ENCODE measurements at regions of chr10 and their contacts with region 1.

Region 1: GRCh38 chr10:21533467-21534279 is at the start of gene MLLT10:
- DNase-seq: peak; percentile 97
- H3K4me3 ChIP-seq: peak within 1 kb of the TSS; percentile 66 to 93 (median 92)
- H3K27ac ChIP-seq: peak within 1 kb of the TSS; percentile 95 to 99 (median 97)
- H3K4me1 ChIP-seq: peaks cover 0 to 56% (median 26%) of the 10 kb centered on the region in 4 donors
- H3K27me3 ChIP-seq: no peaks in the 10 kb centered on the region
- CTCF ChIP-seq: peak in 3 of 4 experiments; percentile 38 to 69 (median 55)
- EP300 ChIP-seq: no peak
- POLR2A ChIP-seq: peak; percentile 59 to 76
- total RNA-seq, gene MLLT10: 36.0 to 53.7 (median 45.1) TPM

Region 2: GRCh38 chr10:21516242-21517131 is 17.2 kb before region 1 on chr10:
- intact Hi-C with region 1: loop called (anchors 1 kb)
- DNase-seq: peak; percentile 83
- H3K4me3 ChIP-seq: peak overlapping the region; percentile 45 to 68 (median 64)
- H3K27ac ChIP-seq: peak overlapping the region; percentile 86 to 99 (median 92)
- H3K4me1 ChIP-seq: peaks cover 0 to 73% (median 35%) of the 10 kb centered on the region in 4 donors
- H3K27me3 ChIP-seq: peaks cover 0 to 6% (median 0%) of the 10 kb centered on the region in 3 donors
- CTCF ChIP-seq: no peak
- EP300 ChIP-seq: no peak
- POLR2A ChIP-seq: no peak

Region 3: GRCh38 chr10:21724695-21725367 is 191.2 kb after region 1 on chr10:
- intact Hi-C with region 1: loop called (anchors 2 kb)
- DNase-seq: peak; percentile 97
- H3K4me3 ChIP-seq: no peak overlapping the region
- H3K27ac ChIP-seq: peak overlapping the region in 3 of 4 donors; percentile 10 to 60 (median 44)
- H3K4me1 ChIP-seq: peaks cover 0 to 28% (median 24%) of the 10 kb centered on the region in 4 donors
- H3K27me3 ChIP-seq: no peaks in the 10 kb centered on the region
- CTCF ChIP-seq: no peak
- EP300 ChIP-seq: no peak
- POLR2A ChIP-seq: no peak

Region 4: GRCh38 chr10:21732067-21732772 is 198.5 kb after region 1 on chr10:
- intact Hi-C with region 1: loop called (anchors 2 kb)
- DNase-seq: peak; percentile 86
- H3K4me3 ChIP-seq: no peak overlapping the region
- H3K27ac ChIP-seq: no peak overlapping the region
- H3K4me1 ChIP-seq: peaks cover 0 to 7% (median 0%) of the 10 kb centered on the region in 4 donors
- H3K27me3 ChIP-seq: no peaks in the 10 kb centered on the region
- CTCF ChIP-seq: peak; percentile 46 to 80 (median 66)
- EP300 ChIP-seq: no peak
- POLR2A ChIP-seq: no peak